Activated naive CD8-positive, alpha-beta T cell treated with anti-CD3 and anti-CD28 coated beads, Interleukin-2, amount 10 ng/mL, durations not matched to agents 7 days and 5 days (primary cell): ENCODE measurements at regions of chr14 and their contacts with region 1.

Region 1: GRCh38 chr14:24114536-24115450 is at the starts of genes DCAF11 and NRL:
- DNase-seq: peak; percentile 99
- ATAC-seq: peak; percentile 89
- H3K4me3 Mint-ChIP-seq: peak within 1 kb of the TSS; percentile 99
- H3K27ac Mint-ChIP-seq: peak within 1 kb of the TSS; percentile 99
- H3K4me1 Mint-ChIP-seq: peaks cover 24% of the 10 kb centered on the region
- H3K27me3 Mint-ChIP-seq: no peaks in the 10 kb centered on the region
- total RNA-seq, gene DCAF11: 100 to 105 TPM
- total RNA-seq, gene NRL: 3.3 to 3.4 TPM

Region 2: GRCh38 chr14:23539248-23540140 is 575.3 kb before region 1 on chr14:
- POLR2A ChIA-PET with region 1: no interaction called
- DNase-seq: no peak
- ATAC-seq: peak; percentile 61
- H3K4me3 Mint-ChIP-seq: no peak overlapping the region
- H3K27ac Mint-ChIP-seq: no peak overlapping the region
- H3K4me1 Mint-ChIP-seq: peaks cover 5% of the 10 kb centered on the region
- H3K27me3 Mint-ChIP-seq: peaks cover 8% of the 10 kb centered on the region

Region 3: DNA sequence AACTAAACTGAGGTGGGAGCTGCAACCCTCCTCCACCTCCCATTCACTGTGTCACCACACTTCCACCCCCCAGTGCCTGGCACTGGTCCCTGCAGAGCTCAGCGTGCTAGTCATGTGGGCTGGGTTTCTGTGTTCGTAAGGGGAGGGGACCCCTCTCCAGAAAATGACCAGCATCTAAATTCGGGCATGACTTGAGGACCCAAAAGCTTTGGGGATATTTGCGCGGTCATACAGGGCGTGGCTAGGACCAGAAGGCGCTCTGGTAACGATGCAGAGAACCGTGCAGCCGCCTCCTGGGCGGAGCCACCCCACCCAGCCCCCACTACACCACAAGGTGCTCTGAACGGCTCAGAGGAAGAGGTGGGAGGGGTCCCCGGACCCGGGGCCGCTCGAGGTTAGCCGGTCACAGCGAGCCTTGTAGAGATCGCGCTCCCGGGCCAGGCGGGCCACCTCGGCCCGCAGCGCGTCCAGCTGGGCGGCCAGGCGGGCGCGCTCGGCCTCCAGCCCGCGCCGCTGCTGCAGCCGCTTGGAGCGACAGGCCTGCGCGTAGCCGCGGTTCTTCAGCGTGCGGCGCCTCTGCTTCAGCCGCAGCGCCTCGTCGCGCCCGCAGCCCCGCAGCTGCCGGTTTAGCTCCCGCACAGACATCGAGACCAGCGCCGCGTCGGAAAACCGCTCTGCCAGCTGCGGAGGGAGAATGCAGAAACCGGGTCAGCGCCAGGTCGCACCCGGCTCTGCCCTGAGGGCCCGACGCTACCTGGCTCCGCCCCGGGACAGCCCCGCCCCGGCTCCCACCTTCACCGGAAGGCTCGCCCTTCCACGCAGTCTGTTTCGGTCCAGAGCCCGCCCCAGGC is 33.7 kb before region 1 on chr14:
- POLR2A ChIA-PET with region 1: interaction called, 27 read pairs
- DNase-seq: peak; percentile 86
- ATAC-seq: peak; percentile 93
- H3K4me3 Mint-ChIP-seq: peak overlapping the region; percentile 80
- H3K27ac Mint-ChIP-seq: peak overlapping the region; percentile 87
- H3K4me1 Mint-ChIP-seq: peaks cover 21% of the 10 kb centered on the region
- H3K27me3 Mint-ChIP-seq: no peaks in the 10 kb centered on the region

Region 4: DNA sequence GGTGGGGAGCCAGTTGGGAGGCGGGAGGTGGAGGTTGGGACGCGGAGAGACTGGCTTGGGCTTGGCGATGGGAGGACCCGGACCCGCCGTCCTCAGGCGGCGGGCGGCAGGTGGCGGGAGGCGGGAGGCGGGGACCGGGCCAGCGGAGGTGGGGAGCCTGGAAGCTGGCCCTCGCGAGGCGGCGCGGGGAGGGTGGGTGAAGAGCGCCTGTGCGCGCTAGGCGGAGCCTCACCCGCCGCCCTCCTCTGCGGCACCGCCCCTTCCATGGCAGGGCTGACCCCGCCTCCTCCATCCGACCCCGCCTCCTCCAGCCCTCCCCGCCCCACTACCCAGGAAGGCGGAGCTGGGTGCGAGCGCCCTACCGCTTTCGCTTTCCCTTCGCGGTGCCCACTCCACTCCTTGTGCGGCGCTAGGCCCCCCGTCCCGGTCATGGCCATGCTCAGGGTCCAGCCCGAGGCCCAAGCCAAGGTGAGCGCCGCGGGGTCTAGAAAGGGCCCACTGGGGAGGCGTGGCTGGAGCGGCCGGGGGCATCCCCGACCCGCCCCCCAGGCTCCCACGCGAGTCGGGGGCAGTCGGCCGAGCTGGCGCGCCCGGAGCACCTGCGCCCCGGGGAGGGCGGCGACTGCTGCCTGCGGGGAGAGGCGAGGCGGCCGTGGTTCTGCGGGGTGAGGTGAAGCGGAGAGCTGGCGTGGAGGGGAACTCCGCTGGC is 21.2 kb after region 1 on chr14 and contains the start of gene PSME1:
- POLR2A ChIA-PET with region 1: interaction called, 176 read pairs
- DNase-seq: peak; percentile 97
- ATAC-seq: peak; percentile 87
- H3K4me3 Mint-ChIP-seq: peak within 1 kb of the TSS; percentile 96
- H3K27ac Mint-ChIP-seq: peak within 1 kb of the TSS; percentile 94
- H3K4me1 Mint-ChIP-seq: peaks cover 51% of the 10 kb centered on the region
- H3K27me3 Mint-ChIP-seq: no peaks in the 10 kb centered on the region
- total RNA-seq, gene PSME1: 430 to 443 TPM

Region 5: GRCh38 chr14:24146978-24147760 is 32.4 kb after region 1 on chr14 and contains the start of gene RNF31:
- POLR2A ChIA-PET with region 1: interaction called, 80 read pairs
- DNase-seq: peak; percentile 95
- ATAC-seq: peak; percentile 82
- H3K4me3 Mint-ChIP-seq: peak within 1 kb of the TSS; percentile 94
- H3K27ac Mint-ChIP-seq: peak within 1 kb of the TSS; percentile 96
- H3K4me1 Mint-ChIP-seq: peaks cover 54% of the 10 kb centered on the region
- H3K27me3 Mint-ChIP-seq: no peaks in the 10 kb centered on the region
- total RNA-seq, gene RNF31: 131 to 153 TPM

Region 6: GRCh38 chr14:24215495-24216344 is 100.9 kb after region 1 on chr14 and contains the start of gene MDP1:
- POLR2A ChIA-PET with region 1: interaction called, 12 read pairs
- DNase-seq: peak; percentile 85
- ATAC-seq: peak; percentile 73
- H3K4me3 Mint-ChIP-seq: peak within 1 kb of the TSS; percentile 93
- H3K27ac Mint-ChIP-seq: peak within 1 kb of the TSS; percentile 98
- H3K4me1 Mint-ChIP-seq: peaks cover 38% of the 10 kb centered on the region
- H3K27me3 Mint-ChIP-seq: no peaks in the 10 kb centered on the region
- total RNA-seq, gene MDP1: 11.9 to 15.4 TPM